Activated CD4-positive, alpha-beta T cell treated with anti-CD3 and anti-CD28 coated beads for 36 hours (primary cell): ENCODE measurements at regions of chr6 and their contacts with region 1.

Region 1: DNA sequence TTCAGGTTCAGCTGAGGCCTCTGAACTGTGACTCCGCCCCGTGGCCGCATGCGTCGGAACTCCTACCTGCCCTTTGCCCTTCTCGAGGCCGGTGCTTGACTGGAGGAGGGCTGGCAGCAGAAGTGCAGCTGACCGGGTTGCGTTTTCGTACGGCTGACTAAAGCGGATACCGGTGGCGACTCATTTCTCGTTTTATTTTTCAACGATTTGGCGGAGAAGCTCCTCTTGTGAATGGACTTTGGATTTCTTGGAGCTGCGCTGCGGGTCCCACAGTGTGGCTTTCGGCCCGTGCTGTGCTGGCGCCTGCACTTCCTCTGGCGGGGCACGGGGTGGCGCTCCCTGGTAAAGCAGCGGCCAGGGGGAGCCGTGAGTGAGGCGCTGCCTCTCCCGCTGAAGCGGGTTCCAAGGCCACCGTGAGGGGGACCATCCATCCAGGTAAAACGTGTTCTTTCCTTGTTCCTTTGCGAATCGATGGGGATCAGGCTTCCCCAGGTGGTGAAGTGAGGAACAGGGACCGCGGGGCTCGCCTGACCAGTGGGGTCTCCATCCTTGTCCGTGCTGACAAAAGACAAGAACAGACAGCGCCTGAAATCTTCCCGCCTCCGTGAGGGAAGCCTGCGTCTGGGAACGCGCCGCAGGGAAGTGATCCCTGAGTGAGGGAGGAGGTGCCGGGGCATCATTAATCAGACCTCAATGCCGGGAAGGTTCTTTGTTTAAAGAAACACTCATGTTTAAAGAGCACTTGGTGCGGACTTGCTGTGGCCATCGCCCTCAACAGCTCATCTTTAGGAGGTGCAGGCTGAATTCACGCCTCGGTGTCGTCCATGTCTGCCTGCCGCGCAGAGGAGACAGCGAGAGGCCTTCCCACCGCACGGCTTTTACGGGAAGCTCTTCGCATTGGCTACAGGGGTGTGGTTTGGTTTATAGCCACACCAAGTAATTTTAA is 38.8 kb downstream of the ERMARD start:
- DNase-seq: peak; percentile 88
- ATAC-seq: peak; percentile 96
- H3K4me3 Mint-ChIP-seq: peak overlapping the region; percentile 77
- H3K27ac Mint-ChIP-seq: peak overlapping the region; percentile 67
- H3K4me1 Mint-ChIP-seq: peaks cover 18% of the 10 kb centered on the region
- H3K27me3 Mint-ChIP-seq: peaks cover 12% of the 10 kb centered on the region

Region 2: DNA sequence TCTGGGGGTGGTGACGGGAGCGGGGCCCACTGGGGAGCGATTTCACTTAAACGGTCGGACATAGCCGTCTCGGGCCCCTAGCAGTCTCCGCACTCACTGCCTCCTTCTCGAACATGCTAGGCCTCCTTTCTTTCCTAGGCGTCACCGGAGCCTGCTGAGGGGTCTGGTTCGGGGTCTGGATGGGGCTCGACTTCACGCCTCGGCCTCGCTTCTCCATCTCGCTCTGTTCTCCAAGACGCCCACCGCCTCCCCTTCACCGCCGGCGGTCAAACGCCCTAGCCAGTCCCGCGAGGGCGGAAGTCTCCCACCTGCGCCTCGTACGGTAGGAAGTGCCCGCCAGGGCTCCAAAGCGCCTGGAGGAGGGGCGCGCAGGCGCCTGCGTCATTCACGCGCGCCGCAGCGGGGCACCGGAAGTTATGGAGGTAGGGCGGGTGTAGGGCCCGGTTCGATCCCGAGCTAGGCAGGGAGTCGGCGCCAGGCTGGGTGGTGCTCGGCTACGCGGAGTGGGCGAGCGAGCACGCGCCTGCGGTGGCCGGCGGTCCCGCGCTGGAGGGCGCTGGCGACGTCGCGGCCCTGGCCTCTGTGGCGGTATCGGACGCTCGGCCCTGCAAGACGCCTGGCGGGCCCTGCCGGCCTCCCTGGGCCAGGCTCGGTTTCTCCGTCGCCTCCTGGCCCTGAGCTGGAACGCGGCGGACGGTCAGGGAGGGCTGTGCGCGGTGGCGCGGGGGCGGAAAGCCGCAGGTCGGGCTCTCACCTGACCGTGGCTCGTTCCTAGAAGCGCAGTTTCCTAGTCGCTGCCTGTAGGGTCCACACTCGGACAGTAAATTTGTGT is 38.8 kb before region 1 on chr6 and contains the starts of genes DYNLT2 and ERMARD:
- CTCF ChIA-PET with region 1: interaction called, 15 read pairs
- POLR2A ChIA-PET with region 1: no interaction called
- intact Hi-C with region 1: no loop called
- DNase-seq: peak; percentile 96
- ATAC-seq: peak; percentile 96
- H3K4me3 Mint-ChIP-seq: peak within 1 kb of the TSS; percentile 95
- H3K27ac Mint-ChIP-seq: peak within 1 kb of the TSS; percentile 97
- H3K4me1 Mint-ChIP-seq: peaks cover 23% of the 10 kb centered on the region
- H3K27me3 Mint-ChIP-seq: no peaks in the 10 kb centered on the region
- total RNA-seq, gene DYNLT2: 2.0 to 2.4 TPM
- total RNA-seq, gene ERMARD: 19.2 to 30.2 TPM

Region 3: GRCh38 chr6:169803271-169803811 is 13.1 kb after region 1 on chr6:
- CTCF ChIA-PET with region 1: interaction called, 55 read pairs
- POLR2A ChIA-PET with region 1: no interaction called
- intact Hi-C with region 1: no loop called
- DNase-seq: no peak
- ATAC-seq: peak; percentile 24
- H3K4me3 Mint-ChIP-seq: no peak overlapping the region
- H3K27ac Mint-ChIP-seq: no peak overlapping the region
- H3K4me1 Mint-ChIP-seq: peaks cover 47% of the 10 kb centered on the region
- H3K27me3 Mint-ChIP-seq: peaks cover 37% of the 10 kb centered on the region

Region 4: DNA sequence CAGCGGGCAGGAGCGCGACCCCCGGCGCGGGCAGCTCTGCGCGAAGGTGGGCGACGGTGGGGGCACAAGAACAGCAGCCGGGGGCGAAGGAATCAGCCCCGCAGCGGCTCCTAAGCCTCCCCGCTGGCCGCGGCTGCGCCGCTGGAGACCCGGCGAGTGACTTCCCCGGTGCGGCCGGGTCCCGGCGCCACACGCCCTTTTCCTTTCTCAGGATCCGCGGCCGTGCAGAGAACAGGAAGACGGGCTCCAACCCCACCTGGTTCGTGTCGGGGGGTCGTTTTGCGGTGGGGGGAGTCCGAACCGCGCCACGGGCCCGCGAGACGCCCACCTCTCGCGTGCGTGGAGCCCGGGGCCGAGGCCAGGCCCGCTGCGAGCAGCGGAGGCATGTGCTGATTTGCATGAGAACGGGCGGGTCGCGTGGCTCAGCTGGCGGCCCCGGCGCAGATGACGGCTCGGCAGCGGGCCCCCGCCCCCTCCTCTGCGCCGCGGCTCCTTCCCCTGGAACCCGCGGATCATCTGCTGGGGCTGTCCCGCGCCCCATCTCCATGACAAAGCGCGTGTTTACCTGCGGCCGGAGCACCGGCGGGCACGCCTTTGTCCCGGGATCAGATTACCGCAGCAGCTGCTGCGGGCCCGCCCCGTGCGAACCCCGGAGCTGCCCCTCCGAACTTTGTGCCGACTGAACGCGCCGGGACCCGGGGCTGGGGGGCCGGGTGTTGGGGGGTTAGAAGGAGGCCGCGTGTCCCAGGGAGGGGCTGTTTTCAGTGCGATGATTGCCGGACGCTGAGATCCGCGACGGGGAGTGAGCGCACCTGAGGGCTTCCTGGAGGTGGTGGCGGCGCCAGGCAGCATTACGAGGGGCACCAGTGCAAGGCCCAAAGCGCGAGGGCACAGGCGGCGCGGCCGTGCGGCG is 505.5 kb after region 1 on chr6:
- CTCF ChIA-PET with region 1: no interaction called
- POLR2A ChIA-PET with region 1: no interaction called
- intact Hi-C with region 1: loop called in 1 of 2 experiments (anchors 5 kb)
- DNase-seq: peak; percentile 80
- ATAC-seq: peak; percentile 67
- H3K4me3 Mint-ChIP-seq: peak overlapping the region; percentile 52
- H3K27ac Mint-ChIP-seq: no peak overlapping the region
- H3K4me1 Mint-ChIP-seq: peaks cover 29% of the 10 kb centered on the region
- H3K27me3 Mint-ChIP-seq: peaks cover 61% of the 10 kb centered on the region

Region 5: DNA sequence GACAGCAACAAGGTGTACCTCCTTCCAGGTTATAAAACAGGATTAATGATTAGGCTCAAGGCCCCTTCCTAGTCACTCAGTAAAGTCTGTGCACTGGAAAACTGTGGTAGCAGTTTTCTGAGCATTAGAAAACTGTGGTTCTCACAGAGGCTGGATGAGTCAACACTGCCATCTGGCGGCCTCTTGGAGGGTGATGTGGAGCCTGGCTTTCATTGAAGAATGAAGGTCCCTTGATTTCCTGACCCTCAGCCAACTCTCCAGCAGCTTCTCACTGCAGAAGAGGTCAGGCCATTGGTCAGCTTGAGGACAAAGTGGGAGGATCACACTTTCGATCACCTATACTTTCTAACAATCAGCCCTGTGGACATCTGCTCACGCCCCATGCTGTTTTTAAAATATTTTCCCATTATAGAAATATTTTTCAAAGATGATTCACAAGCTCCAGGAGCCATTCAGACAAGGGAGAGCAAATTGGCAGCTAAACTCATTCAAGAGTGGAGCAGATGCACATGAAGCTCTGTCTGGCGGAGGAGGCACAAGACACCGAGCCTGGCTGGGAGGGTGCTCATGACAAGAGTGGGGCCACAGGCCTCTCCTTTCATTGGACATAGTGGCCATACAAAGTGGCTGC is 739.7 kb after region 1 on chr6:
- CTCF ChIA-PET with region 1: interaction called, 13 read pairs
- POLR2A ChIA-PET with region 1: no interaction called
- intact Hi-C with region 1: loop called in 1 of 2 experiments (anchors 1 kb)
- DNase-seq: peak; percentile 83
- ATAC-seq: peak; percentile 76
- H3K4me3 Mint-ChIP-seq: no peak overlapping the region
- H3K27ac Mint-ChIP-seq: no peak overlapping the region
- H3K4me1 Mint-ChIP-seq: no peaks in the 10 kb centered on the region
- H3K27me3 Mint-ChIP-seq: no peaks in the 10 kb centered on the region